Mucosa of descending colon (tissue), 3 donors: ENCODE measurements at regions of chr3 and their contacts with region 1.

Region 1: GRCh38 chr3:152071924-152072323 is 196.8 kb upstream of the MBNL1 start:
- DNase-seq: no peak
- ATAC-seq: peak; percentile 64
- H3K4me3 ChIP-seq: no peak overlapping the region
- H3K4me1 ChIP-seq: no peaks in the 10 kb centered on the region
- CTCF ChIP-seq: peak; percentile 17

Region 2: GRCh38 chr3:151949706-151950105 is 122.2 kb before region 1 on chr3:
- intact Hi-C with region 1: no loop called
- DNase-seq: no peak
- ATAC-seq: no peak
- H3K4me3 ChIP-seq: no peak overlapping the region
- H3K4me1 ChIP-seq: no peaks in the 10 kb centered on the region
- CTCF ChIP-seq: no peak

Region 3: DNA sequence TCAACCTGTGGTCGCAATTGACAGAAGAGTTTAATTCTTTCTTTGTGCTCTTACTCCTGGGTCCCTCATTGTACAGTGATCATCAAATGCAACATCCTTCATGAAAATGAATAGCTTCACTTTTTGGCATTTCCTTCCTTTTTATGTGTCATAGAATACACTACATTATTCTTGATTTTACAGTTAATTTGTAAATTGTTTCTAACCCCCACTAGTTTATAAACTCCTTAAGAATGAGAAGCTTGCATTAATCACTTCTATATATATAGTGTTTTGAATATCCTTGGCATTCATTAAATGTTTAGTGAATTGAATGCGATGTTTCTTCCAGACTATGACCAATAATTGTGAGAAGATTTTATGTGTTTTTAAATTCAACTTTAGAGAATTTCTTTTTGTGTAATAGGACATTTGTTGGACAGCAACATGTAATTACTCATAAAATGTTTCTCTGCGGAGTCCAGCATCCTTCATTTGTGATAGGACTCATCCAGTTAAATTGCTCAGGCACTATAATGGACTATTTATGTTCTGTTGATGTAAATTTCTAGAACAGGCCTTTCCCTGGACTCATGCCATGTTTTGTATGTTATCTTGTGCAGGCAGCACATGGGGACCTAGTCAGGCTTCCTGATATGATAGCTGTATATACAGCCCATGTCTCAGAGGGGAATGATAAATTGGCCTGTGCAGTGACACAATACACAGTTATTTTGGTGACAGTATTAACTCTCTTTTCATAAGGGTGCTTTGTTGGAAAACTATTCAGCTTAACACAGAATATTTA is 248.1 kb after region 1 on chr3:
- intact Hi-C with region 1: no loop called
- DNase-seq: no peak
- ATAC-seq: peak; percentile 44
- H3K4me3 ChIP-seq: no peak overlapping the region
- H3K4me1 ChIP-seq: peaks cover 6% of the 10 kb centered on the region
- CTCF ChIP-seq: no peak

Region 4: DNA sequence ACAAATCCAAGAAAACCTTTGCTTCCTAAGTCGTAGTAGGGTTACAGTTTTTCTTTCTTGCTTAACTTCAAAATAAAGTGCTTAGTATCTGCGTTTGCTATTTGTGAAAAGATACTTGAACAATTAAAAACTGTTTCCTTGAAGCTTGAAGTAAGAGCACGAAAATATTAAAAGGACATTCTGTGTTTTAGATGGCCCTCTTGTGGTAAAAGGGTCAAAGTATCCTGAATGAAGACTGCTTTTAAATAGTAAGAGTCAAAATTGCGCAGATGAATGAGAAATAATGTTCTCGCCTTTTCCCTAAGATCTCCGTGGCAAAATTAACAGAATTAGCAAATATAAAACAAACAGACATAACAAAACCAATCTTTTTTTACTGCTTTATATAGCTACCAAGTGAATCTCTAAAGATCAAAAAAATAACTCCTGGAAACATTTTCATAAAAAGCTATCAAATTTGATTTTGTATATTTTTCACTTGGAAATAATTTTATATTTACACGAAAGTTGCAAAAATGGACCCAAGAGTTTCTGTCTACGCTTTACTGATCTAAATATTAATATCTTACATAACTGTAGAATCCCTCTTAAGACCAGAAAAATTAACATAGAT is 372.2 kb after region 1 on chr3:
- intact Hi-C with region 1: loop called in 1 of 2 experiments (anchors 10 kb)
- DNase-seq: no peak
- ATAC-seq: peak; percentile 65
- H3K4me3 ChIP-seq: no peak overlapping the region
- H3K4me1 ChIP-seq: peaks cover 7% of the 10 kb centered on the region
- CTCF ChIP-seq: no peak

Region 5: DNA sequence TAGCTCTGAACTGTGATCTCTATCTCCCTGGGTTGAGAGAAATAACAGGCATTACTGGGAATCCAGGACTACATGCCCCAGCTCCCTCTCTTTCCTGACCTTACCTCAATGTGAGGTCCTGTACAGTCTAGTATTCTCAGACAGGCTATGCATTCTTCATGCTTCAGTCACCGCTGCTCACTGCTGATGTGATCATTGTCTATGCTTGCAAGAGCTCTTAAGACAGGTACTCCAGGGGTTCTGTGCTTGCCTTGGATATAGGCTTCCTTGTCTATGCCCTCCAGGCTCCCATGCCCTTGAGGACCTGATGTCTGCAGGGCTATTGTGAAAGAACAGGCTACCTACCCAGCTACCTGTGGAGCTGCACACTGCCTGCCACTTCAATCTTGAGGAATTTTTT is 380.4 kb after region 1 on chr3:
- intact Hi-C with region 1: loop called (anchors 10 kb)
- DNase-seq: no peak
- ATAC-seq: no peak
- H3K4me3 ChIP-seq: no peak overlapping the region
- H3K4me1 ChIP-seq: peaks cover 5% of the 10 kb centered on the region
- CTCF ChIP-seq: no peak